ENCODE measurements at regions of chr6 and their contacts with region 1.

Region 1: GRCh38 chr6:28335564-28336283 is at the start of gene ZSCAN31:
- DNase-seq: peak; percentile 77 to 93 (median 81)
- H3K4me3 ChIP-seq: peak within 1 kb of the TSS; percentile 61 to 85
- H3K4me3 Mint-ChIP-seq: peak within 1 kb of the TSS in 1 of 8 donors; percentile 34
- H3K27ac ChIP-seq: peak within 1 kb of the TSS; percentile 87
- H3K27ac Mint-ChIP-seq: peak within 1 kb of the TSS in 1 of 7 donors; percentile 68
- H3K4me1 ChIP-seq: peaks cover 17% of the 10 kb centered on the region
- H3K4me1 Mint-ChIP-seq: peaks cover 0 to 4% (median 3%) of the 10 kb centered on the region in 4 donors
- H3K27me3 ChIP-seq: no peaks in the 10 kb centered on the region
- H3K27me3 Mint-ChIP-seq: peaks cover 0 to 3% of the 10 kb centered on the region in 2 donors
- total RNA-seq, gene ZSCAN31: 0.73 to 0.97 TPM

Region 2: GRCh38 chr6:27472617-27473400 is 862.9 kb before region 1 on chr6 and contains the start of gene ZNF184:
- CTCF ChIA-PET with region 1: no interaction called
- POLR2A ChIA-PET with region 1: no interaction called
- intact Hi-C with region 1: loop called (anchors 5 kb)
- DNase-seq: peak; percentile 86 to 90 (median 89)
- H3K4me3 ChIP-seq: peak within 1 kb of the TSS; percentile 70 to 98
- H3K4me3 Mint-ChIP-seq: peak within 1 kb of the TSS; percentile 92 to 99 (median 96)
- H3K27ac ChIP-seq: peak within 1 kb of the TSS; percentile 92
- H3K27ac Mint-ChIP-seq: peak within 1 kb of the TSS; percentile 93 to 99 (median 96)
- H3K4me1 ChIP-seq: peaks cover 56% of the 10 kb centered on the region
- H3K4me1 Mint-ChIP-seq: peaks cover 33 to 65% (median 43%) of the 10 kb centered on the region in 4 donors
- H3K27me3 ChIP-seq: no peaks in the 10 kb centered on the region
- H3K27me3 Mint-ChIP-seq: no peaks in the 10 kb centered on the region
- total RNA-seq, gene ZNF184: 15.2 to 17.4 TPM

Region 3: GRCh38 chr6:28252009-28252975 is 83.4 kb before region 1 on chr6 and contains the start of gene ZKSCAN4:
- CTCF ChIA-PET with region 1: no interaction called
- POLR2A ChIA-PET with region 1: interaction called, 5 read pairs
- intact Hi-C with region 1: loop called (anchors 1 kb)
- DNase-seq: peak; percentile 79 to 82 (median 80)
- H3K4me3 ChIP-seq: peak within 1 kb of the TSS; percentile 98 to 99
- H3K4me3 Mint-ChIP-seq: peak within 1 kb of the TSS; percentile 94 to 99 (median 97)
- H3K27ac ChIP-seq: peak within 1 kb of the TSS; percentile 52
- H3K27ac Mint-ChIP-seq: peak within 1 kb of the TSS; percentile 75 to 95 (median 89)
- H3K4me1 ChIP-seq: peaks cover 22% of the 10 kb centered on the region
- H3K4me1 Mint-ChIP-seq: peaks cover 22 to 38% (median 31%) of the 10 kb centered on the region in 4 donors
- H3K27me3 ChIP-seq: no peaks in the 10 kb centered on the region
- H3K27me3 Mint-ChIP-seq: no peaks in the 10 kb centered on the region
- total RNA-seq, gene ZKSCAN4: 9.9 to 11.1 TPM

Region 4: GRCh38 chr6:28349892-28350737 is 14.4 kb after region 1 on chr6 and contains the start of gene ZKSCAN3:
- CTCF ChIA-PET with region 1: interaction called, 20 read pairs
- POLR2A ChIA-PET with region 1: interaction called, 20 read pairs
- intact Hi-C with region 1: loop called (anchors 1 kb)
- DNase-seq: peak; percentile 75 to 85 (median 79)
- H3K4me3 ChIP-seq: peak within 1 kb of the TSS; percentile 54 to 74
- H3K4me3 Mint-ChIP-seq: peak within 1 kb of the TSS; percentile 96 to 100 (median 99)
- H3K27ac ChIP-seq: peak within 1 kb of the TSS; percentile 57
- H3K27ac Mint-ChIP-seq: peak within 1 kb of the TSS; percentile 78 to 99 (median 97)
- H3K4me1 ChIP-seq: peaks cover 20% of the 10 kb centered on the region
- H3K4me1 Mint-ChIP-seq: peaks cover 23 to 34% (median 28%) of the 10 kb centered on the region in 4 donors
- H3K27me3 ChIP-seq: no peaks in the 10 kb centered on the region
- H3K27me3 Mint-ChIP-seq: peaks cover 8 to 14% of the 10 kb centered on the region in 2 donors
- total RNA-seq, gene ZKSCAN3: 12.4 to 12.6 TPM

Measured in CD4-positive, alpha-beta memory T cell (primary cell).